HEK293T (cell line): ENCODE measurements at regions of chr5 and their contacts with region 1.

Region 1: DNA sequence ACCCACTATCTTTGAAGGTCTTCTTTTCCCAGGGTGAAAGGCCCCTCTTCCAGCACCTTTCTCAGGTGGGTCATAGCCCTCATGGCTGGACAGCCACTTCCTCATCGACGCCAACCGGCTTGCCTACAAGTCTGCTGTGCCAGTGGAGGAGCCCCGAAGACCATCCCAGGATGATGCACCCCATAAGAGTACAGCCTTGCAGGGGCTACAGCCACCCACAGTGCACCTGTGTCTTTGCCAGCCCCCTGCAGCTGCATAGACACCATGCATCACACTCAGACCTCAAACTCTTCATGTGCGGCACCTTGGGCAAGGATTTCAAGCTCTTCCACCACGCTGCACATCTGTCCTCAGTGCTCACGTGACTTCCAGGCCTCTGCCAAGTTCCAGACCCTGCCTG is 173.4 kb downstream of the SLF1 start:
- DNase-seq: no peak

Region 2: DNA sequence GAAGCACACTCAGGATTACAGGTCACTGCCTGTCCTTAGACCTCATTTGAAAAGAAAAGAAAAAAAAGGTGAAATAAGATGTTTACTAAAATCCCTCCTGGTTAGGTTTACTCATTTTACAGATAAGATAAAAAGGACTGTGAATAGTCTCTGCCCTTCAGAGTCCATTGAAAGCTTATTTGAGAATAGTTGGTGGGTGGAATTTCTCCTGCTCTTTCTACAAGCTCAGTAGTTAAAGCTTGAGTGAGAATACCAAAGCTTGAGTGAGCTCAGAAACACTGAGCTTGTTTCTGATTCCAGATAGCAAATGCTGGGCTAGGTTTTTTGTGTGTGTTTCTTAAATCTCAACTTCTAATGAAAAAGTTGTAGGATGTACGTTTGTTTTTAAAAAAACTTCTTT is 66.7 kb before region 1 on chr5:
- CTCF ChIA-PET with region 1: no interaction called
- POLR2A ChIA-PET with region 1: no interaction called
- DNase-seq: no peak

Region 3: DNA sequence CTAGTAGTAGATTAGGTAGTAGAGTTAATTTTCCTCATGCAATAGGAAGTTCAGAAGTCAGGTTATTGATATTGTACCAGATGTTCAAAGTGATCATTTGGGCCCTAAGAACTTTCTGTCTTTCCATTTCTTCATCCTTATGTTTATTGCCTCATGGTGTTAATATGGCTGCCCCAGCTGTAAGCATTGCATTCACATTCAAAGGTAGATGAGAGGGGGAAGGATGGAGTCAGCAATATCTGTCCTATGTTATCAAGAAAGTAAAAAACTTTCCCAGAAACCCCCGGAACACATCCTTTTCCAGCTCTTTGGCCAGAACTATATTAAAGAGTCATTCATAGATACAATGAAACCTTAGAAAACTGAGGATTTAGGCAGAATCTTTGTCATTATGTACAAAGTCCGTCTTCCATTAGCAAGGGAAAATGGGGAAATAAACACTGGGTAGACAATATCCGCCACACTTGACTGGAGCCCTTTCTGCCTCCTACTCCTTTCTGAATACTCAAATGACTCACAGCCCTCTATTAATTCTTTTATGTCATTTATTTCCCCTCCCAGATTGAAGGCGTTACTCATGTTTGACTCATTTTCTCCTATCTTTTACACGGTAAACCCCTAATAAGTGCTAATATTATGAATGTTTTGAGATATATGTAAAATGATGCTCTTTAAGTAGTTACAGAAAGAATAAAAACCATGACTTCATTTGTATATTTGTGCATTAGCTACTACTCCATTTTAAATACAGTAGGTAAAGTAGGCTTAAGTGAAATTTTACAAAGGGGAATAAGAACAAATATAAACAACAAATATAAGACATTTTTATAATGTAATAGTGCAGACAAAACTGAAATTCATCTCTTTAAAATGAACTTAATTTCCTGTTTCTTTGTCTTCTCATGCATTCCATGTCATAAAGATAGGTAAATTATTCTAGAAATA is 45.8 kb before region 1 on chr5:
- CTCF ChIA-PET with region 1: interaction called, 14 read pairs
- POLR2A ChIA-PET with region 1: no interaction called
- DNase-seq: no peak

Region 4: GRCh38 chr5:94807985-94808384 is 16.2 kb after region 1 on chr5:
- CTCF ChIA-PET with region 1: no interaction called
- POLR2A ChIA-PET with region 1: no interaction called
- DNase-seq: no peak

Region 5: GRCh38 chr5:94872526-94872925 is 80.7 kb after region 1 on chr5:
- CTCF ChIA-PET with region 1: no interaction called
- POLR2A ChIA-PET with region 1: no interaction called
- DNase-seq: no peak